Activated B cell treated with CpG ODN at 0.5 μM for 24 hours (primary cell): ENCODE measurements at regions of chr2 and their contacts with region 1.

Region 1: DNA sequence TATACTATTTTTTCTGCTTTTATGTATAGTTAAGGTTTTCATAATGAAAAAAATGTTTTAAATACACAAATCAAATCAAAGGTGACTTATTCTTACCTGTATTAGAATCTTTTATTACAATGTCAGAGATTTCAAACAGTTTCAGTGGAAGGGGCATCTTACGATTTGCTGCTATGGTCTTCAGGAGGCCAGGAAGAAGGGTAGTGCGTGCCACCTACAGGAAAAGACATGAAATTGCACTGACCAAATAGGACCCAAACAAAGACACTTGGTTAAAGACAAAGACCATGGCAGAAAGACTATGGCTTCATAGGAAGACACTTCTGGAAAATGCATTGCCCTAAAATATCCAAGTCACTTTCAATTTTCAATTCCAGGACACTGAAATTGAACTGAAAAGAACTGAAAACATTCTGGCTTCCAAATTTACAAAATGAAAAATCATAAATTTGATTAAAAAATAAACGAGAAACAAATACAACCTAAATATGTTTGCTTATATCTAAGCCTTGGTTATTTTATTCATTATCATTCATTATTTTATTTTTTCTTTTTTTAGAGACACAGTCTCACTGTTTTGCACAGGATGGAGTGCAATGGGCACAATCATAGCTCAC is 42.1 kb downstream of the FARSB start:
- DNase-seq: no peak
- ATAC-seq: peak; percentile 82
- H3K4me3 Mint-ChIP-seq: no peak overlapping the region
- H3K27ac Mint-ChIP-seq: no peak overlapping the region
- H3K4me1 Mint-ChIP-seq: no peaks in the 10 kb centered on the region
- H3K27me3 Mint-ChIP-seq: no peaks in the 10 kb centered on the region
- CTCF ChIP-seq: peak; percentile 22

Region 2: GRCh38 chr2:221969087-221969829 is 644.6 kb before region 1 on chr2:
- CTCF ChIA-PET with region 1: no interaction called
- POLR2A ChIA-PET with region 1: no interaction called
- intact Hi-C with region 1: no loop called
- DNase-seq: no peak
- ATAC-seq: no peak
- H3K4me3 Mint-ChIP-seq: no peak overlapping the region
- H3K27ac Mint-ChIP-seq: no peak overlapping the region
- H3K4me1 Mint-ChIP-seq: no peaks in the 10 kb centered on the region
- H3K27me3 Mint-ChIP-seq: peaks cover 1% of the 10 kb centered on the region
- CTCF ChIP-seq: no peak

Region 3: GRCh38 chr2:222024932-222025880 is 588.6 kb before region 1 on chr2:
- CTCF ChIA-PET with region 1: interaction called, 3 read pairs
- POLR2A ChIA-PET with region 1: no interaction called
- intact Hi-C with region 1: loop called (anchors 1 kb)
- DNase-seq: no peak
- ATAC-seq: no peak
- H3K4me3 Mint-ChIP-seq: no peak overlapping the region
- H3K27ac Mint-ChIP-seq: no peak overlapping the region
- H3K4me1 Mint-ChIP-seq: no peaks in the 10 kb centered on the region
- H3K27me3 Mint-ChIP-seq: no peaks in the 10 kb centered on the region
- CTCF ChIP-seq: no peak

Region 4: GRCh38 chr2:223538920-223539440 is 925.2 kb after region 1 on chr2:
- CTCF ChIA-PET with region 1: no interaction called
- POLR2A ChIA-PET with region 1: no interaction called
- intact Hi-C with region 1: no loop called
- DNase-seq: no peak
- ATAC-seq: no peak
- H3K4me3 Mint-ChIP-seq: no peak overlapping the region
- H3K27ac Mint-ChIP-seq: no peak overlapping the region
- H3K4me1 Mint-ChIP-seq: no peaks in the 10 kb centered on the region
- H3K27me3 Mint-ChIP-seq: no peaks in the 10 kb centered on the region
- CTCF ChIP-seq: no peak